ENCODE measurements at regions of chrX and their contacts with region 1.

Region 1: DNA sequence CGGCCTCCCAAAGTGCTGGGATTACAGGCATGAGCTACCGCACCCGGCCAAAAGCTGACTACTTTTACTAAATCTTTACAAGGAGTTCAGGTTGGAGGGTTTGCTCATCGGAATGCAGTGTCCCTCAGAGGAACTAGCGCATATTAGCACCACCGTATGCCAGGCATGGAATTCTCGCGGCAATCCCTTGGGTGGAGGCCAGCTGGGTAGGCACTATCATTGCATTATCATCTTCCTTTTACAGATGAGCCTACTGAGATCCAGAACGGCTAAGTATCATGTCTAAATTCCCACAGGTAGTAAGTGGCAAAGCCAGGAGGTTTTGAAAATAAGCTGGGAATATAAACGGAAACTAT is 6.1 kb upstream of the CXorf66 start:
- DNase-seq: no peak
- H3K4me3 Mint-ChIP-seq: no peak overlapping the region
- H3K27ac Mint-ChIP-seq: no peak overlapping the region
- H3K4me1 Mint-ChIP-seq: no peaks in the 10 kb centered on the region
- H3K27me3 Mint-ChIP-seq: peaks cover 8% of the 10 kb centered on the region

Region 2: DNA sequence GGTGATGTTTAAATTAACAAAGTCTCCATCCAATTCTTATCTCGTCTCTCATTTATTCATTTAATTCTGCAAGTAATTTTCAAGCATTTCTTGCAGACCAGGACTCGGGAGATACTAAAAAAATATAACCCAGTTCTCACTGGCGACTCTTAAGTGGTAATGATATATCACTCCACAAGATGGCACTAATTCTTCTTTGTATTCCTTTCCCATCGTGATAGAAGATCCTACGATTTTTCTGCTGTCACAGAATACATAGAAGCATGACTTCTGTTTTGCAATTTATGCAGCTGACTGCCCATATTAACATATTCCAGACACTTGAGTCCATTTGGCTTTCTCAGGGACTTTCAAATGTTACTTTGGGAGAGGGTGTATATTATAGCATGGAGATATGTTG is 1195.9 kb before region 1 on chrX:
- CTCF ChIA-PET with region 1: no interaction called
- POLR2A ChIA-PET with region 1: no interaction called
- intact Hi-C with region 1: loop called (anchors 5 kb)
- DNase-seq: no peak
- H3K4me3 Mint-ChIP-seq: no peak overlapping the region
- H3K27ac Mint-ChIP-seq: no peak overlapping the region
- H3K4me1 Mint-ChIP-seq: no peaks in the 10 kb centered on the region
- H3K27me3 Mint-ChIP-seq: no peaks in the 10 kb centered on the region

Region 3: GRCh38 chrX:139811942-139812629 is 159.3 kb before region 1 on chrX:
- CTCF ChIA-PET with region 1: no interaction called
- POLR2A ChIA-PET with region 1: no interaction called
- intact Hi-C with region 1: no loop called
- DNase-seq: no peak
- H3K4me3 Mint-ChIP-seq: no peak overlapping the region
- H3K27ac Mint-ChIP-seq: no peak overlapping the region
- H3K4me1 Mint-ChIP-seq: peaks cover 12% of the 10 kb centered on the region
- H3K27me3 Mint-ChIP-seq: no peaks in the 10 kb centered on the region

Region 4: DNA sequence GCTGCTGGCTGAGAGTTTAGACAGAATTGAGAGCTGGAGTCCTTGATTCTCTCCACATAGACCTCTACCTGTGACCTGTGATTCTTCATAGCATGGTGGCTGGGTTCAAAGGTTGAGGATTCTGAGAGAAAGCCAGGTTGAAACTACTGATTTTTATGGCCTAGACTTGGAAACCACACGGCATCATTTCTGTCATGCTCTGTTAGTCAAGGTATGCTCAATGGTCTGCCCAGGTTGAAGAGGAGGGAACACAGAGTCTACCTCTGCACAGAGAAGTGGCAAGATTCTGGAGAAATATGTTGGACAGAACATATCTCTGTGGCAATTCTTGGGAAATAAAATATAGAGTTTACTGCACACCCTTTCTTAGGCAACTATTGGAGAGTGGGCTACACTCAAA is 51.1 kb after region 1 on chrX:
- CTCF ChIA-PET with region 1: no interaction called
- POLR2A ChIA-PET with region 1: no interaction called
- intact Hi-C with region 1: no loop called
- DNase-seq: no peak
- H3K4me3 Mint-ChIP-seq: no peak overlapping the region
- H3K27ac Mint-ChIP-seq: no peak overlapping the region
- H3K4me1 Mint-ChIP-seq: no peaks in the 10 kb centered on the region
- H3K27me3 Mint-ChIP-seq: no peaks in the 10 kb centered on the region

Region 5: DNA sequence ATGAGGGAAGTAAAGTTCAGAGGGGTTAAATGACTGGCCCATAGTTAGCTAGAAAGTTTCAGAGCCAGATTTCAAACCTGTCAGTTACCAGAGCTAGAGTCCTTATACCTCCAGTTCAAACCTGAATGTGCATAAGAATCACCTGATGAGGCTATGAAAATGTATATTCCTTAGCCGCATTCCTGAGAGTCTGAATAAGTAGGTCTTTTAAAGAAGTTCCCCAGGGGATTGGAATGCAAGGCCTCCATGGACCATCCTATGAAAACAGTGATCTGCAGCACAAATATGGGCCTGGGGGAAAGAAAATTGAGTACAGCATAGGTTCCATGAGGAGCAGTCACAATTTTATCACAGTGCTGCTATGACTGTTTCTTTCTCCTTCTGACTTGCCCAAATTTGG is 257.8 kb after region 1 on chrX:
- CTCF ChIA-PET with region 1: no interaction called
- POLR2A ChIA-PET with region 1: no interaction called
- intact Hi-C with region 1: no loop called
- DNase-seq: no peak
- H3K4me3 Mint-ChIP-seq: no peak overlapping the region
- H3K27ac Mint-ChIP-seq: no peak overlapping the region
- H3K4me1 Mint-ChIP-seq: no peaks in the 10 kb centered on the region
- H3K27me3 Mint-ChIP-seq: no peaks in the 10 kb centered on the region